Activated CD4-positive, alpha-beta T cell treated with anti-CD3 and anti-CD28 coated beads for 36 hours (primary cell): ENCODE measurements at regions of chr5 and their contacts with region 1.

Region 1: GRCh38 chr5:270340-270739 is 1.1 kb upstream of the PDCD6 start:
- DNase-seq: no peak
- ATAC-seq: no peak
- H3K4me3 Mint-ChIP-seq: peak overlapping the region; percentile 95
- H3K27ac Mint-ChIP-seq: peak overlapping the region; percentile 47
- H3K4me1 Mint-ChIP-seq: peaks cover 41% of the 10 kb centered on the region
- H3K27me3 Mint-ChIP-seq: no peaks in the 10 kb centered on the region

Region 2: DNA sequence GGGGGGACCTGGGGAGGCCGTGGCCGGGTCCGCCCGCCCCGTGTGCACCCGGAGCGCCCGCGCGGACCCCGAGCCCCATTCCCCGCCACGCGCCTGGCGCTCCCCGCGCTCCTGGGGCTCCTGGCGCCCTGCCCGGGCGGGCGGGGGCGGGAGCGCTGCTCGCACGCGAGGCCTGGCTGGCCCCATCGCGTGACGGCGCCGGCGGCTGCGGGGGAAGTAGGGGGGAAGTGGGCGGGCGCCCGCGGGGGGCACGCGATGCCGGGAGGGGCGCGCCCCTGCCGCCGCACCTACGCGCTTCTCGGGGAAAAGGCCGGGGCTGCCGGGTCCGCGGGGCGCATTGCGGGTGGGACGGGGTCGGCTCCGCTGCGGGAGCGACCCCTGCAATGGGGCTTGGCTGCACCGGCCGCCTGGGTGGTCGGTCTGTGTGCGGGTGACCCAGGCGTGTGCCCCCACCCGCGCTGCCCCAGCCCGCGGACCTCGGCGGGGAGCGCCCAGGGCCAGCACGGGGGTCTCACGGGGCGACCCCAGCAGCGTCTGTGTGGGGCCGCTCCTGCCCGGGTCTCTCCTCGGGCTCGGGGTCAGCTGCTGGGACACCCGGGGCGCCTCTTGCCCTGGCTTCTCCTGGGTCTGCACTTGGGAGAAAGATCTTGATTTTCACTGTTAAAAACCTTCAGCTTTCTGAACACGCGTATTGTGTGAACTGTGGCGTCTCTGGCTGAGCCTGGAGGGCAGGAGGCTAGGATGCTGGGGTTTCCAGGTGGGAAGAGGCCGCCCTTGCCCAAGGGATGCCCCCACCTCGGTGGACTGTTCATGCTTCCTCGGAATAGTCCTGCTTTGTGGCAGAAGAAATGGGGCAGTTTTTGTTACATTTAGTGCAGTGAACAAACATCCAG is 103.6 kb after region 1 on chr5:
- CTCF ChIA-PET with region 1: no interaction called
- POLR2A ChIA-PET with region 1: interaction called, 4 read pairs
- intact Hi-C with region 1: loop called in 1 of 2 experiments (anchors 2 kb)
- DNase-seq: peak; percentile 88
- ATAC-seq: peak; percentile 37
- H3K4me3 Mint-ChIP-seq: peak overlapping the region; percentile 62
- H3K27ac Mint-ChIP-seq: peak overlapping the region; percentile 94
- H3K4me1 Mint-ChIP-seq: peaks cover 69% of the 10 kb centered on the region
- H3K27me3 Mint-ChIP-seq: no peaks in the 10 kb centered on the region